BJ (cell line): ENCODE measurements at regions of chr1 and their contacts with region 1.

Region 1: GRCh38 chr1:15304701-15305467 is 57.9 kb downstream of the FHAD1 start:
- DNase-seq: no peak
- H3K4me3 ChIP-seq: no peak overlapping the region
- H3K27me3 ChIP-seq: no peaks in the 10 kb centered on the region; the same call in 1 of the 2 replicates
- CTCF ChIP-seq: peak; percentile 82

Region 2: GRCh38 chr1:15178571-15179484 is 126.1 kb before region 1 on chr1:
- CTCF ChIA-PET with region 1: no interaction called
- POLR2A ChIA-PET with region 1: no interaction called
- DNase-seq: peak; percentile 65
- H3K4me3 ChIP-seq: no peak overlapping the region
- H3K27me3 ChIP-seq: no peaks in the 10 kb centered on the region
- CTCF ChIP-seq: 0 out of 2 replicates have a peak, but pooled peaks have one; percentile 4

Region 3: DNA sequence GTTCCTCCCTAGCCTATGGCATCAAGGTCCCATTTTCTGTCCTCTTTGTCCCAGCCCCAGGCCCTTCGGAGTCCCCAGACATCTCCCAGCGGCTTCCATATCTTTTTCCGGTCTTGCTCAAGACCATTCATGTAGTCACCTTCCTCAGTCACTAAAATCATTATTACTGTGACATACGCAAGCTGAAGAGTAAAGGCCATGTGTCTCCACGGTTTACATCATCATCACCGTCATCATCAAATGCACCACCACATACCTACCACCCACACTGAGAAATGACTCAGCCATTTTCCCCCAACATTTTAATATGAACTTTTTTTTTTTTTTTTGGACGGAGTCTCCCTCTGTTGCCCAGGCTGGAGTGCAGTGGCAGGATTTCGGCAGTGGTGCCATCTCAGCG is 14.5 kb before region 1 on chr1:
- CTCF ChIA-PET with region 1: interaction called, 10 read pairs
- POLR2A ChIA-PET with region 1: no interaction called
- DNase-seq: no peak
- H3K4me3 ChIP-seq: no peak overlapping the region
- H3K27me3 ChIP-seq: no peaks in the 10 kb centered on the region; the same call in 1 of the 2 replicates
- CTCF ChIP-seq: no peak